CD8-positive, alpha-beta T cell (primary cell): ENCODE measurements at regions of chr1 and their contacts with region 1.

Region 1: GRCh38 chr1:89649783-89650182 is 16.9 kb downstream of the LRRC8C start:
- DNase-seq: no peak
- ATAC-seq: no peak
- H3K4me3 ChIP-seq: no peak overlapping the region
- H3K4me3 Mint-ChIP-seq: peak overlapping the region; percentile 9
- H3K27ac ChIP-seq: peak overlapping the region in 1 of 2 experiments; percentile 39
- H3K27ac Mint-ChIP-seq: peak overlapping the region; percentile 73
- H3K4me1 ChIP-seq: peaks cover 54% of the 10 kb centered on the region
- H3K4me1 Mint-ChIP-seq: peaks cover 70% of the 10 kb centered on the region
- H3K27me3 ChIP-seq: no peaks in the 10 kb centered on the region
- H3K27me3 Mint-ChIP-seq: no peaks in the 10 kb centered on the region
- CTCF ChIP-seq: no peak

Region 2: GRCh38 chr1:89666640-89667039 is 16.9 kb after region 1 on chr1:
- CTCF ChIA-PET with region 1: interaction called, 3 read pairs
- POLR2A ChIA-PET with region 1: no interaction called
- intact Hi-C with region 1: loop called (anchors 1 to 2 kb)
- DNase-seq: no peak
- ATAC-seq: no peak
- H3K4me3 ChIP-seq: no peak overlapping the region
- H3K4me3 Mint-ChIP-seq: no peak overlapping the region
- H3K27ac ChIP-seq: peak overlapping the region in 1 of 2 experiments; percentile 27
- H3K27ac Mint-ChIP-seq: peak overlapping the region; percentile 75
- H3K4me1 ChIP-seq: peaks cover 61% of the 10 kb centered on the region
- H3K4me1 Mint-ChIP-seq: peaks cover 80% of the 10 kb centered on the region
- H3K27me3 ChIP-seq: no peaks in the 10 kb centered on the region
- H3K27me3 Mint-ChIP-seq: no peaks in the 10 kb centered on the region
- CTCF ChIP-seq: no peak

Region 3: GRCh38 chr1:89671775-89672488 is 22.1 kb after region 1 on chr1:
- CTCF ChIA-PET with region 1: interaction called, 3 read pairs
- POLR2A ChIA-PET with region 1: interaction called, 3 read pairs
- intact Hi-C with region 1: loop called (anchors 1 to 2 kb)
- DNase-seq: no peak
- ATAC-seq: no peak
- H3K4me3 ChIP-seq: no peak overlapping the region
- H3K4me3 Mint-ChIP-seq: no peak overlapping the region
- H3K27ac ChIP-seq: no peak overlapping the region
- H3K27ac Mint-ChIP-seq: peak overlapping the region; percentile 23
- H3K4me1 ChIP-seq: peaks cover 83% of the 10 kb centered on the region
- H3K4me1 Mint-ChIP-seq: peaks cover 90% of the 10 kb centered on the region
- H3K27me3 ChIP-seq: no peaks in the 10 kb centered on the region
- H3K27me3 Mint-ChIP-seq: no peaks in the 10 kb centered on the region
- CTCF ChIP-seq: no peak

Region 4: GRCh38 chr1:89681045-89681729 is 31.4 kb after region 1 on chr1:
- CTCF ChIA-PET with region 1: no interaction called
- POLR2A ChIA-PET with region 1: no interaction called
- intact Hi-C with region 1: loop called in 1 of 2 experiments (anchors 5 kb)
- DNase-seq: no peak
- ATAC-seq: no peak
- H3K4me3 ChIP-seq: no peak overlapping the region
- H3K4me3 Mint-ChIP-seq: no peak overlapping the region
- H3K27ac ChIP-seq: no peak overlapping the region
- H3K27ac Mint-ChIP-seq: peak overlapping the region; percentile 41
- H3K4me1 ChIP-seq: peaks cover 32% of the 10 kb centered on the region
- H3K4me1 Mint-ChIP-seq: peaks cover 62% of the 10 kb centered on the region
- H3K27me3 ChIP-seq: no peaks in the 10 kb centered on the region
- H3K27me3 Mint-ChIP-seq: no peaks in the 10 kb centered on the region
- CTCF ChIP-seq: no peak